AG04450 (cell line): ENCODE measurements at regions of chr1 and their contacts with region 1.

Region 1: GRCh38 chr1:31027693-31028526 is 37.6 kb downstream of the PUM1 start:
- DNase-seq: no peak
- H3K4me3 ChIP-seq: no peak overlapping the region
- H3K27ac ChIP-seq: no peak overlapping the region
- H3K27me3 ChIP-seq: no peaks in the 10 kb centered on the region
- CTCF ChIP-seq: no peak

Region 2: DNA sequence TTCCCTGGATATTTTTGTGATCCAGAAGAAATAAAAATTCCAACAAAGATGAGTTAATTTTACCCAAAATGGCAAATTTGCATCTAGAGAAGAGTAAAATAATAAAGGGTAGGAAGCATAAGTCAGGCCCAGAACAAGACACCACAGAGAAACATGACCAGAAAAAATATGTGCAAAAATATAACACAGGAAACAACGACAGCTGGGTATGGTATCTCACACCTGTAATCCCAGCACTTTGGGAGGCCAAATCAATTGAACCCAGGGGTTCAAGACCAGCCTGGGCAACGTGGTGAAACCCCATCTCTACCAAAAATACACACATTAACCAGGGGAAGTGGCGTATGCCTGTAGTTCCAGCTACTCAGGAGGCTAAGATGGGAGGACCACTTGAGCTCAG is 79.6 kb before region 1 on chr1:
- CTCF ChIA-PET with region 1: interaction called, 12 read pairs
- POLR2A ChIA-PET with region 1: no interaction called
- DNase-seq: no peak
- H3K4me3 ChIP-seq: no peak overlapping the region
- H3K27ac ChIP-seq: no peak overlapping the region
- H3K27me3 ChIP-seq: no peaks in the 10 kb centered on the region
- CTCF ChIP-seq: no peak

Region 3: DNA sequence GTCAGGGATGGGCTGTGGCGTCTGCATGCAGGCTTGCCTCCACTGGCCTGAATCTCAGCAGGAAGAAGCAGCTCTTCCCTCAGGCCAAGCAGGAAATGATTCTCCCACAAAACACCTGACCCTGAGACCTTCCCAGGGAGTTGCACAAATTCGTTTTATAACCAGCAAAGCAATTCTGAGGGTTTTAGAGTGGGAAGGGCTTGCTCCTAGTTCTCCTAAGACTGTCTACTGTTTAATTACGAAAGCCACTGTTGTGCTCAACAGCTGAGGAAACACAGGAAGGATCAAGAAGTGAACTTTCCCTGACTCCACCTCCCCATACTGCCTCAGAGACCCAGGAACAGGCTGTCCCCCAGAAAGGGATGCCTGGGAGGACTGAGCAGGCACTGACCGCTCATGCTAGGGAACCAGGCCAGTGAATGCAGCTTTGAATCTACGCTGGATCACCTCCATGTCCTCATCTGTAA is 74.6 kb after region 1 on chr1:
- CTCF ChIA-PET with region 1: no interaction called
- POLR2A ChIA-PET with region 1: no interaction called
- DNase-seq: no peak
- H3K4me3 ChIP-seq: no peak overlapping the region
- H3K27ac ChIP-seq: peak overlapping the region; percentile 57
- H3K27me3 ChIP-seq: no peaks in the 10 kb centered on the region
- CTCF ChIP-seq: no peak